ENCODE measurements at regions of chr19 and their contacts with region 1.

Region 1: GRCh38 chr19:1213391-1214286 is 8.1 kb downstream of the STK11 start:
- DNase-seq: peak; percentile 91
- H3K4me3 Mint-ChIP-seq: peak overlapping the region; percentile 63
- H3K27ac Mint-ChIP-seq: peak overlapping the region; percentile 89
- H3K4me1 Mint-ChIP-seq: peaks cover 46% of the 10 kb centered on the region
- H3K27me3 Mint-ChIP-seq: no peaks in the 10 kb centered on the region
- CTCF ChIP-seq: no peak

Region 2: GRCh38 chr19:1241417-1242095 is 27.9 kb after region 1 on chr19 and contains the start of gene ATP5F1D:
- CTCF ChIA-PET with region 1: interaction called, 9 read pairs
- POLR2A ChIA-PET with region 1: interaction called, 11 read pairs
- intact Hi-C with region 1: no loop called
- DNase-seq: peak; percentile 93
- H3K4me3 Mint-ChIP-seq: peak within 1 kb of the TSS; percentile 71
- H3K27ac Mint-ChIP-seq: peak within 1 kb of the TSS; percentile 75
- H3K4me1 Mint-ChIP-seq: peaks cover 10% of the 10 kb centered on the region
- H3K27me3 Mint-ChIP-seq: no peaks in the 10 kb centered on the region
- CTCF ChIP-seq: no peak
- total RNA-seq, gene ATP5F1D: 256 and 258 TPM in 2 replicates

Region 3: DNA sequence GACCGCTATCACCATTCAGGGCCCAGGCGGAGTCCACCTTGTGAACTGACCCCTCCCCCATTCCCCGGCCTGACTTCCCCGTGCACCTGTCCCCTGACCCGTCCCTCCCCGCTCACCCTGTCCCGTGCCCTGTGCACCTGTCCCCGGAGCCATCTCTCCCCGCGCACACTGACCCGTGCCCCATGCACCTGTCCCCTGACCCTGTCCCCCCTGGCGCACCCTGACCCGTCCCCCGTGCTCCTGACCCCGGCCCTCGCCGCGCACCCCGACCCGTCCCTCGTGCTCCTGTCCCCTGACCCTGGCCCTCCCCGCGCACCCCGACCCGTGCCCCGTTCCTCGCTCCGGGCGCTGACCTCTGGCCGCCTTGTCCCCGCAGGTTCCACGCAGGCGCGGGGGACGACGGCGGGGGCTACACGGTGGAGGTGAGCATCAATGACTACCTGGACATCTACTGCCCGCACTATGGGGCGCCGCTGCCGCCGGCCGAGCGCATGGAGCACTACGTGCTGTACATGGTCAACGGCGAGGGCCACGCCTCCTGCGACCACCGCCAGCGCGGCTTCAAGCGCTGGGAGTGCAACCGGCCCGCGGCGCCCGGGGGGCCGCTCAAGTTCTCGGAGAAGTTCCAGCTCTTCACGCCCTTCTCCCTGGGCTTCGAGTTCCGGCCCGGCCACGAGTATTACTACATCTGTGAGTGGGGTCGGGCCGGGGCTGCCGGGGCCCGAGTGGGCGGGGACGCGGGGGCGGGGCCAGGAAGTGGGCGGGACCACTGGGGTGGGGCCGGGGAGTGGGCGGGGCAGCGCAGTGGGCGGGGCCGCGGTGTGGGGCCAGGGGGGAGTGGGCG is 81.8 kb after region 1 on chr19:
- CTCF ChIA-PET with region 1: no interaction called
- POLR2A ChIA-PET with region 1: no interaction called
- intact Hi-C with region 1: no loop called
- DNase-seq: no peak
- H3K4me3 Mint-ChIP-seq: no peak overlapping the region
- H3K27ac Mint-ChIP-seq: no peak overlapping the region
- H3K4me1 Mint-ChIP-seq: peaks cover 5% of the 10 kb centered on the region
- H3K27me3 Mint-ChIP-seq: peaks cover 11% of the 10 kb centered on the region
- CTCF ChIP-seq: no peak